Naive thymus-derived CD4-positive, alpha-beta T cell (primary cell): ENCODE measurements at regions of chr15 and their contacts with region 1.

Region 1: DNA sequence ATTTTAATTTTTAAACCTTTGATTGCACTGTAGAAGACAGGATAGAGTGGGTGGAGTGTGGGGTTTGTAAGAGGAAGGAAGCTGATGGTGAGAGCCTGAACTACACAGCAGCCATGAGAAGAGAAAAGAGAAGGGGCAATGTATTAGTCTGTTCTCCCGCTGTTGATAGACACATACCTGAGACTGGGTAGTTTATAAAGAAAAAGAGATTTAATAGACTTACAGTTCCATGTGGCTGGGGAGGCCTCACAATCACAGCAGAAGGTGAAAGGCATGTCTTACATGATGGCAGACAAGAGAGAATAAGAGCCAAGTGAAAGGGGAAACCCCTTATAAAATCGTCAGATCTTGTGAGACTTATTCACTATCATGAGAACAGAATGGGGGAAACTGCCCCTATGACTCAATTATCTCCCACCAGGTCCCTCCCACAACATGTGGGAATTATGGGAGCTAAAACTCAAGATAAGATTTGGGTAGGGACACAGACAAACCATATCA is 37.3 kb downstream of the STARD5 start:
- DNase-seq: peak in 7 of 9 donors; percentile 54 to 73 (median 68)
- ATAC-seq: peak; percentile 95
- H3K4me3 ChIP-seq: peak overlapping the region; percentile 49
- H3K4me3 Mint-ChIP-seq: peak overlapping the region; percentile 70 to 86 (median 80)
- H3K27ac ChIP-seq: peak overlapping the region; percentile 72
- H3K27ac Mint-ChIP-seq: peak overlapping the region; percentile 81 to 99 (median 96)
- H3K4me1 ChIP-seq: peaks cover 57 to 80% of the 10 kb centered on the region in 2 donors
- H3K4me1 Mint-ChIP-seq: peaks cover 52 to 98% (median 88%) of the 10 kb centered on the region in 7 donors
- H3K27me3 ChIP-seq: no peaks in the 10 kb centered on the region
- H3K27me3 Mint-ChIP-seq: no peaks in the 10 kb centered on the region

Region 2: DNA sequence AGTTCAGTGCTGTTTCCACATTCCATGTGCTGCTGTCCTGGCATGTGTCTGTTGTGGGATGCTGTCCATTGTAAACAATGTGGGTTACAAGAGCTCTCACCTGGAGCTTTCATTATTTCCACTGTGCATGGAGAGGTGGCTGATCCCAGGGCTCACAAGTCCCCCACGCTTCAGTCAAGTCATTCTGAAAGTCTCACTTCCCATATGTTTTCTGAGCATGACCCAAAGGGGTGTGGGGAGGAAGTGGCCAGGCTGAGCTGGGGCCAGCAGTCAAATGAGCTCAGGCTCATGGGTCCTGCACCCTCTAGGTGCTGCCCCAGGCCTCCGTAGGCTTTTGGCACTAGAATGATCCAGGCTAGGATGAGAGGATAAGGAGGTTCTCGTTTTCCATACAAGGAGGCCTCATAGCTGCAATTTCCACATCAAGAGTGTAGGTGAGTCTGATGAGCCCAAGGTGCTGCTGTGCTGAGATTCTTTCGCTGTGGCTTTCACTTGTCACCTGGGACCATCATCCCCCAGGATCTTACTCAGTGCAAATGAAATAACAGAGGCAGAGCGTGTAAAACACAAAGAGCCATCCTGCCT is 15.2 kb after region 1 on chr15:
- CTCF ChIA-PET with region 1: interaction called, 21 read pairs
- POLR2A ChIA-PET with region 1: interaction called, 642 read pairs
- intact Hi-C with region 1: loop called in 1 of 2 experiments (anchors 1 kb)
- DNase-seq: peak in 1 of 9 donors; percentile 60
- ATAC-seq: peak; percentile 61
- H3K4me3 ChIP-seq: peak overlapping the region; percentile 74
- H3K4me3 Mint-ChIP-seq: peak overlapping the region; percentile 80 to 100 (median 98)
- H3K27ac ChIP-seq: peak overlapping the region; percentile 87
- H3K27ac Mint-ChIP-seq: peak overlapping the region; percentile 79 to 100 (median 96)
- H3K4me1 ChIP-seq: peaks cover 46 to 59% of the 10 kb centered on the region in 2 donors
- H3K4me1 Mint-ChIP-seq: peaks cover 50 to 66% (median 64%) of the 10 kb centered on the region in 7 donors
- H3K27me3 ChIP-seq: no peaks in the 10 kb centered on the region
- H3K27me3 Mint-ChIP-seq: no peaks in the 10 kb centered on the region

Region 3: DNA sequence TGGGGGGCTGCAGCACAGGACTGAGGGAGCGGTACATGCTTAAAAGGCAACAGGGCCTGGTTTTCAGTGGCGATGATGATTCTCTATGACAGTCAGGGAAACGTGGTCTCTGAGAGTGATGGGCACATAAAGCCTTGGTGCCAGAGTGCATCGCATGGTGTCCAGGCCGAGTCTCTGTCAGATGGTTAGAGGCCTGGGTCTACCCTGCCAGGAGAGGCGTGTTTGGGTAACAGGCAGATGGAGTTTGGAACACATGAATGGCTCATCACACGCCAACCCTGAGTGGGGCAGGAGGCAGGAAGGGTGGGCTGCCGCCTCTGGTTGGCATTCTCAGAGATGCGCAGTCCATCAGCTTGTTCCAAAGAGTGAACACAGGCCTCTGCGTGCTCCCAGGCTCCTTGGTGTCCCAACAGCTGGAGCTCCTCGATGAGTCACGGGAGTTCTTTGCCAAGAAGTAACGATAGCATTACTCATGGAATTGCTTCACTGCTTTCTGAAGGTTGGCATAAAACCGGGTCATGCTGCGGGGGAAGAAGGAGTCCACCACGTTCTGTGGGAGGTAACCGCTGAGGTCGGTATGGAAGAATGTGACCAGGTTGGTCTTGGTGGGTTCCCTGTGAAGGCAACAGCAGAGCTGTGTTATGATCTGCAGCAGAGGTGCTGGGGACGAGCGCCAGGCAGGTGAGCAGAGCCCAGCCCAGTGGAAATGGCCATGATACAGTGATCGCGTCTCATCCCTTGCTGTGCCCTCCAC is 26.3 kb after region 1 on chr15:
- CTCF ChIA-PET with region 1: interaction called, 3 read pairs
- POLR2A ChIA-PET with region 1: interaction called, 642 read pairs
- intact Hi-C with region 1: no loop called
- DNase-seq: no peak
- ATAC-seq: peak; percentile 41
- H3K4me3 ChIP-seq: no peak overlapping the region
- H3K4me3 Mint-ChIP-seq: peak overlapping the region in 7 of 10 donors; percentile 8 to 64 (median 46)
- H3K27ac ChIP-seq: peak overlapping the region; percentile 65
- H3K27ac Mint-ChIP-seq: peak overlapping the region in 8 of 9 donors; percentile 74 to 97 (median 90)
- H3K4me1 ChIP-seq: peaks cover 18 to 55% of the 10 kb centered on the region in 2 donors
- H3K4me1 Mint-ChIP-seq: peaks cover 53 to 97% (median 86%) of the 10 kb centered on the region in 7 donors
- H3K27me3 ChIP-seq: no peaks in the 10 kb centered on the region
- H3K27me3 Mint-ChIP-seq: no peaks in the 10 kb centered on the region

Region 4: GRCh38 chr15:81323944-81324881 is 37.5 kb after region 1 on chr15 and contains the start of gene STARD5:
- CTCF ChIA-PET with region 1: no interaction called
- POLR2A ChIA-PET with region 1: interaction called, 480 read pairs
- intact Hi-C with region 1: no loop called
- DNase-seq: peak; percentile 82 to 97 (median 92)
- ATAC-seq: peak; percentile 99
- H3K4me3 ChIP-seq: peak within 1 kb of the TSS; percentile 86
- H3K4me3 Mint-ChIP-seq: peak within 1 kb of the TSS; percentile 90 to 98 (median 94)
- H3K27ac ChIP-seq: peak within 1 kb of the TSS; percentile 78
- H3K27ac Mint-ChIP-seq: peak within 1 kb of the TSS; percentile 87 to 97 (median 92)
- H3K4me1 ChIP-seq: peaks cover 5 to 20% of the 10 kb centered on the region in 2 donors
- H3K4me1 Mint-ChIP-seq: peaks cover 31 to 65% (median 60%) of the 10 kb centered on the region in 7 donors
- H3K27me3 ChIP-seq: no peaks in the 10 kb centered on the region
- H3K27me3 Mint-ChIP-seq: no peaks in the 10 kb centered on the region
- total RNA-seq, gene STARD5: 5.0 to 11.7 (median 10.1) TPM